ENCODE measurements at regions of chr12 and their contacts with region 1.

Region 1: DNA sequence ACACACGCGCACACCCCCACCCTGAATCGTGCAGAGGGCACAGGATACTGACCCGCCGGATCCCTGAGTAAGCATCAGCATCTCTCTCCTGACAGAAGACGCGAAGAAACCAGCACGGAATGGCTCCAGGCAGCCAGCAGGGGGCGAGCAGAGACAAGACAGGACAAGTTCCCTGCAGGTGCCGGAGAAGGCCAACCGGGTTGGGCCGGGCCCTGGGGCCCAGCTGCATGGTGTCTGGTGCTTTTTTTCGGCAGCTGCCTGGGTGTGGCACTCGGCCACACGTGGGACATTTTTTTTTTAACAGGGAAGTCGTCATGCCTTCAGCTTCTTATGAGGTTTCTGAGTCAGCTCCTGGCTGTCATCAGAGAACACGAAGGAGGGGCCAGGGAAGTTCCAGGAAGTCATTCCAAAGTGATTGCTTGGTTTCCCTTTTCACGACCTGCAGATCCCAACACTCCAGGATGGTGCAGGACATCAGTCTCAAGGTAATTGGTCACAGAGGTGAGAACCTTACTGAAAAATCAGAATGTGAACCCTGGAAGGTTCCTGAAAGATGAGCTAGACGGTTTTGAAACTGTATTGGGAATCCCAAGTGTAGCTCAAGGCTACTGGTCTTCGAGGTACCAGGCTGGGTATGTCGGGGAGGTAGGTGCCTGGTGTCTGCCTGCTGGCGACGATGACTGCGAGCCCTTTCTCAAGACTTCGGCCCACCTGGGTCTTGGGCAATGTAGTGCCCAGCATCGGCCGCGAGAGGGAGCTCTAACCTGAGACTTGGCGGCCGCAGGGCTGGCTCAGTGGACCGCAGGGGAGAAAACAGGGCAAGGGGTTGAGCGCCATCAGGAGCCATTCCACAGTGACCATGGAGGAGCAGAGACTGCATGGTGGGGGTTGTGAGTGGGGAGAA is 190.8 kb upstream of the PRMT8 start:
- DNase-seq: peak; percentile 95
- H3K4me3 ChIP-seq: peak overlapping the region; percentile 10; the same call in 1 of the 2 replicates
- H3K27me3 ChIP-seq: no peaks in the 10 kb centered on the region
- CTCF ChIP-seq: peak; percentile 99

Region 2: DNA sequence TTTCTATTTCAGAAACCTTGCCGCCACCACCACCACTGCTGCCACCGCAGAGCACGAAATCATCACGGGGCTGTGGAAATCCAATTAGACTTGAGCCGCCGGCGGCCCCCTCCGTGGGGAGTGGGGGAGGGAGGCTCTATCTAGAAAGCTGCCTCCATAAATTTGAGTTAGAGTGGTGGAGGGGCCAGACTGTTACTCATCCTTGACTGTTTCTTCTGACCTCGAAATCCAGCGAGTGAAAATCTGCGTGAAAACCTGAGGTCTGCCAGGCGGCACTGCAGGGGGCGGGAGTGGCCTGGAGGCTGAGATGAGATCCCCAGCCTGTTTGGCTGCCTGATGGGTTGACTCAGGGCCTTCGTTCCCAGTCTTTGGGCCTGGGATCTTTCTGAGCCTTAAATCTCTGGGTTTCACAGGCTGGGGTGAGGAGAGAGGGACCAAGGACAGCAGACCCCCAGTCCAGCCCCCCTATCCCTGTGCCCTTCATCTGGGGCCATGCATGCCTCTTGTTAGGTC is 193.1 kb before region 1 on chr12:
- CTCF ChIA-PET with region 1: no interaction called
- POLR2A ChIA-PET with region 1: no interaction called
- DNase-seq: no peak
- H3K4me3 ChIP-seq: no peak overlapping the region
- H3K27me3 ChIP-seq: no peaks in the 10 kb centered on the region
- CTCF ChIP-seq: 0 out of 2 replicates have a peak, but pooled peaks have one; percentile 10

Region 3: DNA sequence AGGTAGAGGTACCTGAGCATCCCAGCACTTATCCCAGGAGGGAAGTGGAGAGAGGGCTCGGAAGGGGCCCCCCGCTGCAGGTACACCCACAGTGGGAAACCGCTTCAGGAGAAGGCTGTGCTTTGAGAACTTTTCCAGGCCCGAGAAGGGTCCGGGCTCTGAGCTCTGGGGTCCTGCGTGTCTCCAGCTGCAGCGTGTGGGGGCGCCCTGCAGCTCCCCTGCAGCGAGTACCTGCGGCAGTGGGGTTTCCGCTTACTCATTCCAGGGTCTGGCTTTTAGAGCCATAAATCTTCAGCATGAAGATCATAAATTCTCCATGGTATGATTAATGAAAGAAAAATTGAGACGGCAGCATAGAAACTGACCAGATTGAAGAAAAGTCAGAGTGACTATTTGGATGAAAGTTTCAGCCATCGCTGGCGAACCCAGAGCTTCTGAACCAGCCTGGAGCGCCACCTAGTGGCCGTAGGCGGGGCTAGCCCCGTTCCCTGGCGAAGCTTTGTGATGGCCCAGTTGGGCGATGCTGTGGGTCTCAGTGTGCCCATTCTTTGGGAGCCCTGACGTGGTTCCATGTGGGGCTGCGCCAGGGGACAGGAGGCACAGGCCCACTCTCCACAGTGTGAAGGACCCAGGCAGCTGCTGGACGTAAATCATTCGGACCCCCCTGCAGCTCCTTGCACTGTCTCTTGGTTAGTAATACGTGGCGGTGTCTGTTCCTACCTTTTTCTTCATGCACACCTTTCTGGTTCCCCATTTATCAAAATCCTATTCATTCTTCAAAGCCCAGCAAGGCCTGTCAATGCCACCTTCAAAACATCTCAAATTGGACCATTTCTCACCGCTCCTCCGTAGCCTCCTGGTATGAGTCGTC is 24.8 kb before region 1 on chr12:
- CTCF ChIA-PET with region 1: interaction called, 47 read pairs
- POLR2A ChIA-PET with region 1: no interaction called
- DNase-seq: no peak
- H3K4me3 ChIP-seq: no peak overlapping the region
- H3K27me3 ChIP-seq: no peaks in the 10 kb centered on the region
- CTCF ChIP-seq: peak; percentile 98

Region 4: GRCh38 chr12:3319723-3320492 is 19.7 kb after region 1 on chr12:
- CTCF ChIA-PET with region 1: interaction called, 96 read pairs
- POLR2A ChIA-PET with region 1: no interaction called
- DNase-seq: no peak
- H3K4me3 ChIP-seq: no peak overlapping the region
- H3K27me3 ChIP-seq: peaks cover 5% of the 10 kb centered on the region
- CTCF ChIP-seq: no peak

Region 5: GRCh38 chr12:3698218-3698974 is 398.2 kb after region 1 on chr12:
- CTCF ChIA-PET with region 1: interaction called, 14 read pairs
- POLR2A ChIA-PET with region 1: no interaction called
- DNase-seq: peak; percentile 89
- H3K4me3 ChIP-seq: no peak overlapping the region
- H3K27me3 ChIP-seq: no peaks in the 10 kb centered on the region
- CTCF ChIP-seq: no peak

Region 6: DNA sequence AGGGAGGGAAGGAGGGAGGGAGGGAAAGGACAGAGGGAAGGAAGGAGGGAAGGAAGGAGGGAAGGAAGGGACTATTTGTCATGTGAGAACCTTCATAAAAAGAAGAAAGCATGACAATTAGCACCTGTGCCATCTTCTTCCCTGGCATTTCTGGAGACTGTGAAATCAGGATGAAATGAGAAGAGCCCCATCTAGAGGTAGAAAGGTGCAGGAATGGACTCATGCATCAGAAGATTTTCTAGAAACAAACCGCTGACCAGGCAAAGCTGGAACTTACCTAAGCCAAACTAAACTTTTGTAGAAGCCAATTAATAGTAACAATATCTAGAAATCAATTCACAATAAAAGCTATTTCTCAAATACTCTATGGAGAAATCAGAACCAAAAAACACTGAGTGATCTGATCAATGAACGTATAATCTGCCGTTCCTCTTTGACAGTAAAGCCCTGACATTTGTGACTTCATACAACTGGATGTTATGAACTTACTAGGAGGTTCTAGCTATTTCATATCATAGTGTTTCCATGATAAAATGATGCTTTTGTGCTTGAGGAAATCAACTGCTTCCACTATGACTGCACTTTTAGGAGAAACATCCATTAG is 477.1 kb after region 1 on chr12:
- CTCF ChIA-PET with region 1: interaction called, 134 read pairs
- POLR2A ChIA-PET with region 1: no interaction called
- DNase-seq: no peak
- H3K4me3 ChIP-seq: no peak overlapping the region
- H3K27me3 ChIP-seq: peaks cover 4% of the 10 kb centered on the region; the same call in 1 of the 2 replicates
- CTCF ChIP-seq: peak; percentile 78

Region 7: DNA sequence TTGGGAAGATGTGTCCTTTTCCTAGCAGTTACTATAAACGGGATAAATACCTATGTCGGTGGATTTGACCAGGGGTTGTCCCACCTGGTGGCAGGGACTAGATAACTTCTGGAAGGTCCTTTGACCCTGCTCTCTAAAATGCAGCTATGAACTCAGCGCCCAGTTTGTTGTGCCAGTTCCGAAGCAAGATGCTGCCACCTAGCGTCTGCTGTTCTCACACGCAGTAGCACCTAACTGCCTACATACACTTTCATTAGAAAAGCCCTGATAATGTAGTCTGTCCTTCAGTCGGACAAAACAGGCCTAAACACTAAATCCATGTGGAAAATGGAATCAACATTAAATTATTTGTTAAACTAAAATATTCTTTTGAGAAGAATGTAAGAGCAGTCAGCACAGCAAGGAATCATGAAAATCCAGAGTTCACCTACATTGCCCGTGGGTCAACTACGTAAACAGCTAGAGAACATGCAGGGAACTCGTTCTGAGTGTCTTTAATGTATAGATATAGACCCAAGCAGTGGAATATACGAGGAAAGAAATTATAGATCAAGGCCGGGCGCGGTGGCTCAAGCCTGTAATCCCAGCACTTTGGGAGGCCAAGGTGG is 503.8 kb after region 1 on chr12:
- CTCF ChIA-PET with region 1: interaction called, 107 read pairs
- POLR2A ChIA-PET with region 1: no interaction called
- DNase-seq: no peak
- H3K4me3 ChIP-seq: no peak overlapping the region
- H3K27me3 ChIP-seq: no peaks in the 10 kb centered on the region
- CTCF ChIP-seq: peak; percentile 87

Region 8: DNA sequence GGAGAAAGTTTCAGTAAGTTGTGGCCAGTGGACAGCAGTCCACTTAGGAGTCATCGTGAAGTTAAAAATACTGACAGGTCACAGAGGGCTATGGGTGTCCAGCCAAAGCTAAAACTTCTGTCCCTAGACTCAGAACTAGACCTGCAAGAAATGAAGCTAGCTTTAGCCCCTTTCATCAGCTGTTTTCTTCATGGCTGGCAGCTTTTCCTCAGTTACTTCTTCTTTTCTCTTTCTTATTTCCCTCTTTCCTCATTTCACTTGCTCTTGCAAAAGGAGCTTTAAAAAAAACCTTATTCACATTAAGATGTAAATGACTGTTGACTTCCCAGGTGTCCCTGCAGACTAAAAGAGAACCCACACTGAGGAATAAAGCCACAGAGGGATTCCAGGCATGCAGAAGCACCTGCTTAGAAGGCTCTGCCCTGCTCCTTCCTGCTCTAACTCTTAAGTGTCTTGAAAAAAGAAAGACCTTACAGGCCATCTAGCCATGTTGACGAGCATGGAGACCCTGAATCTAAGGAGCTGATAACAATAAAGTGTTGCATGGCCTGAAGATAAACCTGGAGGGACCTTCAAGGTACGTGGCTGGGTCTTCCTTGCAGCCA is 903.7 kb after region 1 on chr12:
- CTCF ChIA-PET with region 1: no interaction called
- POLR2A ChIA-PET with region 1: no interaction called
- DNase-seq: no peak
- H3K4me3 ChIP-seq: no peak overlapping the region
- H3K27me3 ChIP-seq: peaks cover 3% of the 10 kb centered on the region; the same call in 1 of the 2 replicates
- CTCF ChIP-seq: no peak

Region 9: GRCh38 chr12:4276524-4277204 is 976.5 kb after region 1 on chr12:
- CTCF ChIA-PET with region 1: interaction called, 13 read pairs
- POLR2A ChIA-PET with region 1: no interaction called
- DNase-seq: peak; percentile 11
- H3K4me3 ChIP-seq: no peak overlapping the region
- H3K27me3 ChIP-seq: peaks cover 42% of the 10 kb centered on the region
- CTCF ChIP-seq: peak; percentile 91

Measured in BJ (cell line).